SK-N-SH (cell line): ENCODE measurements at regions of chr11 and their contacts with region 1.

Region 1: GRCh38 chr11:111429066-111429506 is 50.0 kb upstream of the POU2AF1 start:
- DNase-seq: peak; percentile 42
- H3K4me3 ChIP-seq: no peak overlapping the region; a peak in 1 of 4 replicates
- H3K27ac ChIP-seq: no peak overlapping the region
- H3K4me1 ChIP-seq: peaks cover 0 to 8% of the 10 kb centered on the region in 2 experiments; a peak in 1 of 4 replicates
- H3K27me3 ChIP-seq: no peaks in the 10 kb centered on the region
- CTCF ChIP-seq: peak; percentile 70
- EP300 ChIP-seq: no peak
- RAD21 ChIP-seq: peak; percentile 61

Region 2: GRCh38 chr11:111299101-111300026 is 129.7 kb before region 1 on chr11:
- CTCF ChIA-PET with region 1: interaction called, 57 read pairs
- POLR2A ChIA-PET with region 1: no interaction called
- DNase-seq: peak; percentile 92
- H3K4me3 ChIP-seq: peak overlapping the region; percentile 54 to 60
- H3K27ac ChIP-seq: no peak overlapping the region
- H3K4me1 ChIP-seq: peaks cover 5% of the 10 kb centered on the region in 2 experiments; a peak in 2 of 4 replicates
- H3K27me3 ChIP-seq: peaks cover 27% of the 10 kb centered on the region; the same call in 1 of the 2 replicates
- CTCF ChIP-seq: peak; percentile 60
- EP300 ChIP-seq: no peak
- RAD21 ChIP-seq: peak; percentile 58

Region 3: DNA sequence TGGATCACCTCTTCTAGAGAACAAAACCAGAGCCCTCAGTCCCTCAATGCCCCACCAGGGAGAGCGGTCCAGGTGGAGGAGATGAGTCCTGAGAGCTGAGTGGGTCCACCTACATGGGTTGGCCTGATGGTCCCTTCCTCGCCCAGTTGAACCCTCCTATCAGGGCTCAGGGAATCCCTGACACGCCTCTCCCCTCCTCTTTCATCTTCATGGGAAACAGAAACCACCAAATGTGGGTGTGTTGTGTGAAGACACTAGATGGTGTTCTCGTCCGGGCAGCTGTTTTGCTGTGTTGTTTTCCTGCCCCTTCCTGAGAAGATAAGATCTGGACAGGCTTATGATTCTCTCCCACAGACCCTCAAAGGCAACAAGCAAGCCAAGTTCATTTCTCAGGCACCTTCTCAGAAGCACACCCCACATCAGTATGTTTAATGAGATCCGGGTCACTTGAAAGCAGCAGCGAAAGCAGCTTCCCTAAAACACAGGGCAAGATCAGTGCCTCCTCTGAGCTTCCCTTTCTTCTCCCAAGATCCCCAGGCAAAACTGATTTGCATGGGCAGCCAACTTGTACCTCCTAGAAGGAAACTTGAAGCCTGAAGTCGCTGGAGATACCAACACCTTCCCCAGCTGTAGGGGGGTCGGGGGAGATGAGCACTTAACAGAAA is 14.7 kb before region 1 on chr11:
- CTCF ChIA-PET with region 1: interaction called, 42 read pairs
- POLR2A ChIA-PET with region 1: no interaction called
- DNase-seq: no peak
- H3K4me3 ChIP-seq: no peak overlapping the region
- H3K27ac ChIP-seq: no peak overlapping the region
- H3K4me1 ChIP-seq: no peaks in the 10 kb centered on the region
- H3K27me3 ChIP-seq: no peaks in the 10 kb centered on the region; the same call in 1 of the 2 replicates
- CTCF ChIP-seq: no peak
- EP300 ChIP-seq: no peak
- RAD21 ChIP-seq: no peak

Region 4: DNA sequence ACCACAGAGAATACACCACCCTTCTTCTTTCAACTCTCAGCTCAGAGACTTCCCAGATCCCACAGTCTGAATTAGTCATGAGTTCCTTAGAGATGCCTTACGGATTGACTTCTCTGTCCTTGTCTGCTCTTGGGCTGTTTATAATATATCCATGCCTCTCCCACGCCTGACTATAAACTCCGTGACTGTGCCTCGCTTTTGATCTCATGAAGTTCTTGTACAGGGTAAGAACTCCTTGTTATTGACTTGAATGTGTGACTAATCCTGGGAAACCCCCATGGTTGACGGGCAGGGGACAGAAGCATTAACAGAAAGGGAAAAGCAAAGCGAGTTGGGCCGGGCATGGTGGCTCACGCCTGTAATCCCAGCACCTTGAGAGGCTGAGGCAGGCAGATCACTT is 12.4 kb after region 1 on chr11:
- CTCF ChIA-PET with region 1: interaction called, 53 read pairs
- POLR2A ChIA-PET with region 1: no interaction called
- DNase-seq: no peak
- H3K4me3 ChIP-seq: no peak overlapping the region
- H3K27ac ChIP-seq: no peak overlapping the region
- H3K4me1 ChIP-seq: peaks cover 6 to 7% of the 10 kb centered on the region in 2 experiments; a peak in 2 of 4 replicates
- H3K27me3 ChIP-seq: no peaks in the 10 kb centered on the region
- CTCF ChIP-seq: no peak
- EP300 ChIP-seq: no peak
- RAD21 ChIP-seq: no peak

Region 5: GRCh38 chr11:111446404-111447111 is 17.5 kb after region 1 on chr11:
- CTCF ChIA-PET with region 1: interaction called, 53 read pairs
- POLR2A ChIA-PET with region 1: no interaction called
- DNase-seq: peak; percentile 86
- H3K4me3 ChIP-seq: no peak overlapping the region; a peak in 1 of 4 replicates
- H3K27ac ChIP-seq: no peak overlapping the region
- H3K4me1 ChIP-seq: peaks cover 0 to 5% of the 10 kb centered on the region in 2 experiments; a peak in 1 of 4 replicates
- H3K27me3 ChIP-seq: no peaks in the 10 kb centered on the region
- CTCF ChIP-seq: peak; percentile 87
- EP300 ChIP-seq: no peak
- RAD21 ChIP-seq: peak; percentile 97

Region 6: GRCh38 chr11:111454561-111455192 is 25.6 kb after region 1 on chr11:
- CTCF ChIA-PET with region 1: interaction called, 19 read pairs
- POLR2A ChIA-PET with region 1: no interaction called
- DNase-seq: peak; percentile 78
- H3K4me3 ChIP-seq: no peak overlapping the region
- H3K27ac ChIP-seq: peak overlapping the region in 1 of 2 experiments; percentile 48; a peak in 2 of 4 replicates
- H3K4me1 ChIP-seq: peaks cover 0 to 6% of the 10 kb centered on the region in 2 experiments; a peak in 2 of 4 replicates
- H3K27me3 ChIP-seq: no peaks in the 10 kb centered on the region
- CTCF ChIP-seq: peak; percentile 53
- EP300 ChIP-seq: peak in 1 of 2 experiments; percentile 11; a peak in 1 of 4 replicates
- RAD21 ChIP-seq: peak; percentile 67